H1 (cell line): ENCODE measurements at regions of chr7 and their contacts with region 1.

Region 1: GRCh38 chr7:70870349-70870748 is 261.6 kb upstream of the GALNT17 start:
- DNase-seq: no peak
- H3K4me3 ChIP-seq: no peak overlapping the region
- H3K27ac ChIP-seq: no peak overlapping the region
- H3K4me1 ChIP-seq: peaks cover 0 to 2% (median 0%) of the 10 kb centered on the region in 4 experiments; a peak in 1 of 7 replicates
- H3K27me3 ChIP-seq: no peaks in the 10 kb centered on the region
- CTCF ChIP-seq: no peak
- EP300 ChIP-seq: no peak
- POLR2A ChIP-seq: no peak
- RAD21 ChIP-seq: no peak

Region 2: GRCh38 chr7:70856866-70857630 is 13.3 kb before region 1 on chr7:
- CTCF ChIA-PET with region 1: interaction called, 10 read pairs
- POLR2A ChIA-PET with region 1: interaction called, 4 read pairs
- DNase-seq: peak; percentile 79 to 98
- H3K4me3 ChIP-seq: peak overlapping the region in 1 of 4 experiments; percentile 33; a peak in 1 of 8 replicates
- H3K27ac ChIP-seq: no peak overlapping the region; the same call in 1 of the 2 replicates
- H3K4me1 ChIP-seq: peaks cover 0 to 9% (median 3%) of the 10 kb centered on the region in 4 experiments; a peak in 4 of 7 replicates
- H3K27me3 ChIP-seq: no peaks in the 10 kb centered on the region
- CTCF ChIP-seq: peak; percentile 63 to 78 (median 73)
- EP300 ChIP-seq: no peak
- POLR2A ChIP-seq: no peak
- RAD21 ChIP-seq: peak; percentile 99 to 100